ENCODE measurements at regions of chr14 and their contacts with region 1.

Region 1: DNA sequence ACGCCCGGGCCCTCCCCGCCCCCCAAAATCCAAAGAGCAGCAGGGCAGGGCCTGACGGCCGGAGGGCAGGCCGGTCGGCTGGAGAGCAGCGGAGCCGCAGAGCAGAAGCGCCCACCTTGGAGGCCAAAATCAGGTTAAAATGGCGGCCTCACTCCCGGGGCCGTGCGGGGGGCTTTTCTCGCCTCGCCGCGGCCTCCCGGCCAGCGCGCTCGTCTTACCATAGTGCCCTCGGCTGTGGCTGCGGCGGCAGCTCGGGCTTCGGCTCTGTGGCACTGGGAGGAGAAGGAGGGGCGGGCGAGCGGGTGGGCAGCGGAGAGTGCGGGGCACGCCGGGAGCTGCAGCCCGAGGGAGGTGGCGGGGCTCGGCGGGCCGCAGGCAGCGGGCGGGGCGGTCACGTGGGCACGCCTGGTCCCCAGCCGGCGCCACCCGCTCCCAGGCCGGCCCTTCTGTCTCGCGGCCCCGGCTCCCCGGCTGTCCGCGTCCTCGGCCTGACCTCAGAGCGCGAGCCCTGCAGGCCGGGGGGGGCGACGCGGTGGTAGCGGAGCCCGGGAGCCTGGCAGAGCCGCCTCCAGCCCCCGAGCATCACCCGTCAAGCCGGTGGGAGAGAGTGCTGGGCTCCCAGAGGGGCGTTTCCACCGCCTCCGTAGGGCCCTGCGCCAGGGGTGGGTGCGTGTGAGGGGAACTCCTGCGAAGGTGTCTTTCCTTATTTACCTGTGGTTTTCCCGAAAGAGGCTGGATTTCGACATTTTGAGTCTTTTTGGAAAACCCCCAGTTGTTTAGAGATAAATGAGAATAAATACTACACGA is at the start of gene CFL2:
- DNase-seq: peak; percentile 80
- ATAC-seq: peak; percentile 90
- H3K4me3 Mint-ChIP-seq: peak within 1 kb of the TSS; percentile 92
- H3K27ac Mint-ChIP-seq: peak within 1 kb of the TSS; percentile 89
- H3K4me1 Mint-ChIP-seq: peaks cover 32% of the 10 kb centered on the region
- H3K27me3 Mint-ChIP-seq: no peaks in the 10 kb centered on the region
- CTCF ChIP-seq: no peak
- total RNA-seq, gene CFL2: 19.1 and 20.8 TPM in 2 replicates

Region 2: DNA sequence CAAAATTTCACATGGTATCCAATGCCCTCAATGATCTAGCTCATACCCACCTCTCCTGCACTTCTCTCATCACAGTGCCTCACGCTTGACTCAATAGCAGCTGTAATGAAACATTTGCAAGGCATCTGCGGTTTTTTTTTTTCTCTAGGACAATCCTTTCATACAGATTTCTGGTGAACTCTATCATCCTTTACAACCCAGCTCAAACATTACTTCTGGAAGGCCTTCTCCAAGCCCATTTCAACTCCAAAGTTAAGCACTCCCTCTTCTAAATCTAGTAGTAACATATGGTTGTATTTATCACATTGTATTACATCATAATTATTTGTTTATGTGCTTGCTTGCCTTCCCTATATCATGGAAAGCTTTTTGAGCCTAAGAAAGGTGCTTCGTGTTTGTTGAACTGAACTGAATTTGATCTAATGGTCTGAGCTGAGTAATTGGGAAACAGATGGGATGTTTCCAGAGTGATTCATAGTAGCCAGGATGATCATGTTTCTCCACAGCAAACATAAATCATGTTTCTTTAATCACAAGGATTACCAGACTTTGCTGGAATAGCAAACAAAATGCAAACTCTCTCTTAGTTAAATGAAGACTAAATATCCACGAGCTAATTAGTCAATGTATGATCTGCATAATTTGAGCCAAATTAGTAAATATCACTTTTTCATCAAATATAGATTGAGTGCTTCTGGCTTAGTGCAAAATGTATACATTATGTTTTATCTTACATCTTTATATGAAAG is 14.5 kb before region 1 on chr14:
- CTCF ChIA-PET with region 1: no interaction called
- POLR2A ChIA-PET with region 1: no interaction called
- intact Hi-C with region 1: loop called (anchors 2 kb)
- DNase-seq: no peak
- ATAC-seq: no peak
- H3K4me3 Mint-ChIP-seq: no peak overlapping the region
- H3K27ac Mint-ChIP-seq: no peak overlapping the region
- H3K4me1 Mint-ChIP-seq: no peaks in the 10 kb centered on the region
- H3K27me3 Mint-ChIP-seq: no peaks in the 10 kb centered on the region
- CTCF ChIP-seq: no peak

Region 3: GRCh38 chr14:35020713-35021112 is 306.2 kb after region 1 on chr14:
- CTCF ChIA-PET with region 1: no interaction called
- POLR2A ChIA-PET with region 1: no interaction called
- intact Hi-C with region 1: no loop called
- DNase-seq: no peak
- ATAC-seq: no peak
- H3K4me3 Mint-ChIP-seq: no peak overlapping the region
- H3K27ac Mint-ChIP-seq: no peak overlapping the region
- H3K4me1 Mint-ChIP-seq: no peaks in the 10 kb centered on the region
- H3K27me3 Mint-ChIP-seq: no peaks in the 10 kb centered on the region
- CTCF ChIP-seq: no peak

Measured in activated B cell treated with CpG ODN at 0.5 μM for 24 hours (primary cell).